ENCODE measurements at regions of chr2 and their contacts with region 1.

Region 1: GRCh38 chr2:32772638-32773447 is 145.0 kb downstream of the TTC27 start:
- DNase-seq: no peak
- H3K4me3 ChIP-seq: no peak overlapping the region
- H3K27ac ChIP-seq: no peak overlapping the region
- H3K4me1 ChIP-seq: no peaks in the 10 kb centered on the region
- H3K27me3 ChIP-seq: no peaks in the 10 kb centered on the region
- CTCF ChIP-seq: peak in 3 of 4 experiments; percentile 46 to 71 (median 68)
- POLR2A ChIP-seq: no peak

Region 2: GRCh38 chr2:32553829-32554432 is 218.9 kb before region 1 on chr2:
- intact Hi-C with region 1: loop called (anchors 10 kb)
- DNase-seq: no peak
- H3K4me3 ChIP-seq: no peak overlapping the region
- H3K27ac ChIP-seq: no peak overlapping the region
- H3K4me1 ChIP-seq: no peaks in the 10 kb centered on the region
- H3K27me3 ChIP-seq: no peaks in the 10 kb centered on the region
- CTCF ChIP-seq: peak in 3 of 4 experiments; percentile 46 to 73 (median 71)
- POLR2A ChIP-seq: no peak

Region 3: GRCh38 chr2:32946314-32947075 is 173.7 kb after region 1 on chr2 and contains the start of gene LTBP1:
- intact Hi-C with region 1: loop called (anchors 2 kb)
- DNase-seq: peak; percentile 75
- H3K4me3 ChIP-seq: peak within 1 kb of the TSS; percentile 89 to 92
- H3K27ac ChIP-seq: peak within 1 kb of the TSS; percentile 90 to 91
- H3K4me1 ChIP-seq: no peaks in the 10 kb centered on the region
- H3K27me3 ChIP-seq: no peaks in the 10 kb centered on the region
- CTCF ChIP-seq: peak; percentile 55 to 74 (median 68)
- POLR2A ChIP-seq: peak; percentile 68
- total RNA-seq, gene LTBP1: 25.9 to 99.8 TPM

Region 4: DNA sequence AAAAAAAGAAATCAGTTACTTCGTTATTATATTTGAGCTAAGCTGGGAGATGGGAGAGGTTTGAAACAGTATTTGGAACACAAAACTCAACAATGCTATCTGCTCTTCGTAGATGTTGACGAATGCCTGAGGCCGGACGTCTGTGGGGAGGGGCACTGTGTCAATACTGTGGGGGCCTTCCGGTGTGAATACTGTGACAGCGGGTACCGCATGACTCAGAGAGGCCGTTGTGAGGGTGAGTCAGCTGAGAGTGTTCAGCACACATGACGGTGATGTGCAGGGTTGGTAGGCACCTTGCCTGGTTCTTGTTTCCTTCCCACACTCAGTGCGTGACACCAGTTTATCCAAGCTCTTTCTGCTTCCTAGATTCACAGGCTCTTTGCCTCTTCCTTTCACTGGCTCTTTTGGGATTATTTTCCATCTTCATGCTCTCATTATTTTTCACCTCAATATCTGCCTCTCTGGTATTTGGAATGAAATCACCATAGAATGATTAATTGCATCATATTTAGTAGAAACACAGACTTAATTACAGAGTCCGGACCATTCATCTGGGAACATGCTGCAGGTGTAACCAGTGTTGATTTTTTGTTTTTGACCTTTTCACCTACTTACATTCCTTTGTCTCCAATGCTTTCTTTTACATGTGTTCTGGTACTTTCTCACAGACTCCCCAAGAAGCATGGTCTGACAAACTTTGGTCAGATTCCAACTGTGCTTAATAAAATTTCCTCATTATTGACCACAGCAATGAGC is 503.0 kb after region 1 on chr2:
- intact Hi-C with region 1: loop called (anchors 5 kb)
- DNase-seq: no peak
- H3K4me3 ChIP-seq: no peak overlapping the region
- H3K27ac ChIP-seq: no peak overlapping the region
- H3K4me1 ChIP-seq: no peaks in the 10 kb centered on the region
- H3K27me3 ChIP-seq: no peaks in the 10 kb centered on the region
- CTCF ChIP-seq: no peak
- POLR2A ChIP-seq: no peak

Region 5: DNA sequence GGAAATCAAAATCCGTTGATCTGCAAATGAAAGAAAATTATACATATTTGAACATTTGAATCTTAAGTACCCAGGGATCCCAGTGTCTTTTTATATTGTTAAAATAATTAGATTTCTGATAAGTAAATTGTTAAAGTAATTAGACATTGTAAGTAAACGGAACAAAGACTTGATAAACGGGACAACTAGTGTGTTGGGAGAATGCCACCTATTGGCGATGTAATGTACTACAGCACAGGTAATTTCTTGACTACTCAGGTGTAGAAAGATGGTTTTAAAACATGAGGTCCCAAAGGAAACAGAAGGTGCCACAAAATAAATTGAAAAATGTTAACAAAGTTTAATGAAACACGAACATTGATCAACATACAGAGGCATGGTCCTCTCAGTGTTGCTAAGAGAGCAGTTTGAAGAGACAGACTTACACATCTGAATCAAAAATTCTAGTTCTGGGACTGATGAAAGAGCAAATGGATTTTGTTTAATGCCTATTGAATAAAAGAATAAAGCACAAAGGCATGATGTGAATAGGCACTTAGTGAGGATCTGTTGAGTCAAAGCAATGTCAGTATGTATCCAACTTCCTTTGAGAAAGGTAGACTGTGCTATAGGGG is 600.2 kb after region 1 on chr2:
- intact Hi-C with region 1: loop called (anchors 10 kb)
- DNase-seq: peak; percentile 39
- H3K4me3 ChIP-seq: no peak overlapping the region
- H3K27ac ChIP-seq: no peak overlapping the region
- H3K4me1 ChIP-seq: no peaks in the 10 kb centered on the region
- H3K27me3 ChIP-seq: no peaks in the 10 kb centered on the region
- CTCF ChIP-seq: peak; percentile 44 to 77 (median 68)
- POLR2A ChIP-seq: no peak

Region 6: GRCh38 chr2:33583194-33583938 is 810.5 kb after region 1 on chr2:
- intact Hi-C with region 1: loop called (anchors 5 kb)
- DNase-seq: no peak
- H3K4me3 ChIP-seq: no peak overlapping the region
- H3K27ac ChIP-seq: no peak overlapping the region
- H3K4me1 ChIP-seq: no peaks in the 10 kb centered on the region
- H3K27me3 ChIP-seq: no peaks in the 10 kb centered on the region
- CTCF ChIP-seq: peak; percentile 51 to 83 (median 67)
- POLR2A ChIP-seq: no peak

Measured in prostate gland (tissue), 2 donors.